ENCODE measurements at regions of chr18 and their contacts with region 1.

Region 1: GRCh38 chr18:59387687-59388565 is 28.9 kb upstream of the LMAN1 start:
- DNase-seq: no peak
- ATAC-seq: no peak
- H3K4me3 ChIP-seq: no peak overlapping the region
- H3K27ac ChIP-seq: no peak overlapping the region
- H3K4me1 ChIP-seq: peaks cover 0 to 6% (median 0%) of the 10 kb centered on the region in 9 donors
- H3K27me3 ChIP-seq: peaks cover 0 to 7% (median 0%) of the 10 kb centered on the region in 7 donors
- CTCF ChIP-seq: no peak

Region 2: DNA sequence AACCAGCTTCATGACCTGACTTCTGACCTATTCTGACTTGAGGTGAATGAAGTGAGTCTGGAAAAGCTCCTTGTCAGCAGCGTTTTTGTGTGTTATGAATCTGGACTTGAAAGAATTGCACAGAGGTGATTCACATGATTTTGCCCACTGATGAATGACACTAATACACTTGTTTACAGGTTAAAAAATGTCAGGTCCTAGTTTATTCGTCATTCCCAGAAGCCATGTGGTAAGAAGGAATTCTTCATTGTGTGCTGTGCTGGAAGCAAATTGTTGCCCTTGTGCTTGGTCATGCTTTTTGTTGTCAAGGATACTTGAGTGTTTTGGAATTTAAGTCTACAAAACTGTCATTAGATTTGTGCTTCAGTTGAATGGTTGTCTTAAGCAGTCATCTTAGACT is 232.8 kb before region 1 on chr18:
- intact Hi-C with region 1: no loop called
- DNase-seq: no peak
- ATAC-seq: no peak
- H3K4me3 ChIP-seq: no peak overlapping the region
- H3K27ac ChIP-seq: no peak overlapping the region
- H3K4me1 ChIP-seq: no peaks in the 10 kb centered on the region
- H3K27me3 ChIP-seq: no peaks in the 10 kb centered on the region
- CTCF ChIP-seq: no peak

Region 3: DNA sequence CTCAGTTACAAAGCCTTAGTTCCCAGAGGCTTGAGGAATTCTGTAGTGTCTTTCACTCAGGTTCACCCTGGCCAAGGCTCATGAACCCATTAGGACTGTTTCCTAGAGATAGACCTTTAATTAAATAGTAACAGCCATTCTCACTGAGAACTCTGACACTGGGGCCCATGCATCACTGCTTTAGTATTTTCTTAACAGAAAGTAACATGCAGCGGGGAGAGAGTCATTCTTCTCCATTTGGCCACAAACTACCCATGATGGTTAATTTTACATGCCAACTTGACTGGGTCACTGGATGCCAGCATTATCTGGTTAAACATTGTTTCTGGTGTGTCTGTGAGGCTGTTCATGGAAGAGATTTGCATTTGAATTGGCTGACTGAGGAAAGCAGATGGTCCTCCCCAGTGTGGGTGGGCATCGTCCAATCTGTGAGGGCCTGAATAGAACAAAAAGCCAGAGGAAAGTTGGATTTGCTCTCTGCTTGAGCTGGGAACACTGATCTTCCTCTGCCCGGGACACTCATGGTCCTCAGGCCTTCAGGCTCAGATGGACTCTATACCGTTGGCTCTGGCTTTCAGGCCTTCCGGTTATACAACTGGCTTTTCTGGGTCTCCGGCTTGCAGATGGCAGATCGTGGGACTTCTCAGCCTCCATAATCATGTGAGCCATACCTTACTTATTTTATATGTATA is 63.8 kb before region 1 on chr18:
- intact Hi-C with region 1: loop called in 1 of 10 experiments (anchors 5 kb)
- DNase-seq: no peak
- ATAC-seq: no peak
- H3K4me3 ChIP-seq: no peak overlapping the region
- H3K27ac ChIP-seq: no peak overlapping the region
- H3K4me1 ChIP-seq: no peaks in the 10 kb centered on the region
- H3K27me3 ChIP-seq: peaks cover 0 to 6% (median 0%) of the 10 kb centered on the region in 7 donors
- CTCF ChIP-seq: no peak

Measured in heart right ventricle (tissue), 16 donors.